Transverse colon (tissue), 4 donors: ENCODE measurements at regions of chr20 and their contacts with region 1.

Region 1: GRCh38 chr20:4108495-4109306 is 93.3 kb upstream of the RNF24 start:
- DNase-seq: peak; percentile 63
- H3K4me3 ChIP-seq: no peak overlapping the region
- H3K27ac ChIP-seq: no peak overlapping the region
- H3K4me1 ChIP-seq: peaks cover 0 to 14% (median 4%) of the 10 kb centered on the region in 4 donors
- H3K27me3 ChIP-seq: peaks cover 4% of the 10 kb centered on the region
- CTCF ChIP-seq: peak; percentile 94 to 97 (median 94)
- EP300 ChIP-seq: no peak
- POLR2A ChIP-seq: no peak

Region 2: GRCh38 chr20:3901028-3901705 is 207.5 kb before region 1 on chr20:
- in situ Hi-C with region 1: no loop called
- intact Hi-C with region 1: no loop called
- DNase-seq: no peak
- H3K4me3 ChIP-seq: no peak overlapping the region
- H3K27ac ChIP-seq: peak overlapping the region; percentile 22 to 58 (median 40)
- H3K4me1 ChIP-seq: peaks cover 14 to 88% (median 36%) of the 10 kb centered on the region in 4 donors
- H3K27me3 ChIP-seq: no peaks in the 10 kb centered on the region
- CTCF ChIP-seq: no peak
- EP300 ChIP-seq: no peak
- POLR2A ChIP-seq: no peak

Region 3: GRCh38 chr20:4160761-4161305 is 52.1 kb after region 1 on chr20:
- in situ Hi-C with region 1: loop called in 1 of 4 experiments (anchors 10 kb)
- intact Hi-C with region 1: no loop called
- DNase-seq: peak; percentile 32
- H3K4me3 ChIP-seq: no peak overlapping the region
- H3K27ac ChIP-seq: peak overlapping the region in 2 of 4 donors; percentile 11 to 47
- H3K4me1 ChIP-seq: peaks cover 0 to 18% (median 11%) of the 10 kb centered on the region in 4 donors
- H3K27me3 ChIP-seq: no peaks in the 10 kb centered on the region
- CTCF ChIP-seq: no peak
- EP300 ChIP-seq: no peak
- POLR2A ChIP-seq: no peak

Region 4: GRCh38 chr20:4174909-4175308 is 66.2 kb after region 1 on chr20:
- in situ Hi-C with region 1: loop called in 2 of 4 experiments (anchors 5 kb)
- intact Hi-C with region 1: no loop called
- DNase-seq: no peak
- H3K4me3 ChIP-seq: no peak overlapping the region
- H3K27ac ChIP-seq: no peak overlapping the region
- H3K4me1 ChIP-seq: peaks cover 7 to 16% (median 10%) of the 10 kb centered on the region in 4 donors
- H3K27me3 ChIP-seq: no peaks in the 10 kb centered on the region
- CTCF ChIP-seq: no peak
- EP300 ChIP-seq: no peak
- POLR2A ChIP-seq: no peak

Region 5: DNA sequence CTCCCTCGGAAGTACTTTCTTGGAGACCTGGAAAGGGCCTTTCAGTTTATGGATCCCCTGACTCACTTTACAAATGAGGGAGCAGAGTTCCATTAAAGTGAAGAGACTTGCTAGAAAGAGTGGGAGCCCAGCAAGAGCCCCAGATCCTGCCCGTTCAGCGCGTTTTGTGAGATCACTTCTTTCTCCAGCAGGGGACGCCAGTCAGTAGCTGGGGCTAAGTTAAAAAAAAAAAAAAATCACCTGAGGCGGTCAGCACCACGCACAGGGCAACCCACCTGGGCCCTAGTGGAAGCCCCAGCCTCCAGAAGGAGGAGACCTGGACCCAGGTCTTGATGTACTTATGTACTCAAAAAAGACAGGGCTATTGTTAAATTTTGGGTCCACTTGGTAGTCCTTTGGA is 181.2 kb after region 1 on chr20:
- in situ Hi-C with region 1: no loop called
- intact Hi-C with region 1: no loop called
- DNase-seq: no peak
- H3K4me3 ChIP-seq: no peak overlapping the region
- H3K27ac ChIP-seq: no peak overlapping the region
- H3K4me1 ChIP-seq: no peaks in the 10 kb centered on the region
- H3K27me3 ChIP-seq: no peaks in the 10 kb centered on the region
- CTCF ChIP-seq: no peak
- EP300 ChIP-seq: no peak
- POLR2A ChIP-seq: no peak

Region 6: GRCh38 chr20:4585104-4585753 is 476.5 kb after region 1 on chr20:
- in situ Hi-C with region 1: loop called in 2 of 4 experiments (anchors 10 to 25 kb)
- intact Hi-C with region 1: no loop called
- DNase-seq: no peak
- H3K4me3 ChIP-seq: no peak overlapping the region
- H3K27ac ChIP-seq: no peak overlapping the region
- H3K4me1 ChIP-seq: no peaks in the 10 kb centered on the region
- H3K27me3 ChIP-seq: no peaks in the 10 kb centered on the region
- CTCF ChIP-seq: no peak
- EP300 ChIP-seq: no peak
- POLR2A ChIP-seq: no peak

Region 7: GRCh38 chr20:4592316-4593148 is 483.8 kb after region 1 on chr20:
- in situ Hi-C with region 1: loop called in 2 of 4 experiments (anchors 10 to 25 kb)
- intact Hi-C with region 1: no loop called
- DNase-seq: peak; percentile 38
- H3K4me3 ChIP-seq: peak overlapping the region in 3 of 4 donors; percentile 28 to 47 (median 32)
- H3K27ac ChIP-seq: no peak overlapping the region
- H3K4me1 ChIP-seq: peaks cover 7 to 13% (median 10%) of the 10 kb centered on the region in 4 donors
- H3K27me3 ChIP-seq: no peaks in the 10 kb centered on the region
- CTCF ChIP-seq: peak; percentile 68 to 96 (median 93)
- EP300 ChIP-seq: no peak
- POLR2A ChIP-seq: no peak